ENCODE measurements at regions of chr14 and their contacts with region 1.

Region 1: GRCh38 chr14:59267046-59267445 is 78.6 kb downstream of the DAAM1 start:
- DNase-seq: no peak
- H3K27ac ChIP-seq: no peak overlapping the region
- CTCF ChIP-seq: no peak

Region 2: DNA sequence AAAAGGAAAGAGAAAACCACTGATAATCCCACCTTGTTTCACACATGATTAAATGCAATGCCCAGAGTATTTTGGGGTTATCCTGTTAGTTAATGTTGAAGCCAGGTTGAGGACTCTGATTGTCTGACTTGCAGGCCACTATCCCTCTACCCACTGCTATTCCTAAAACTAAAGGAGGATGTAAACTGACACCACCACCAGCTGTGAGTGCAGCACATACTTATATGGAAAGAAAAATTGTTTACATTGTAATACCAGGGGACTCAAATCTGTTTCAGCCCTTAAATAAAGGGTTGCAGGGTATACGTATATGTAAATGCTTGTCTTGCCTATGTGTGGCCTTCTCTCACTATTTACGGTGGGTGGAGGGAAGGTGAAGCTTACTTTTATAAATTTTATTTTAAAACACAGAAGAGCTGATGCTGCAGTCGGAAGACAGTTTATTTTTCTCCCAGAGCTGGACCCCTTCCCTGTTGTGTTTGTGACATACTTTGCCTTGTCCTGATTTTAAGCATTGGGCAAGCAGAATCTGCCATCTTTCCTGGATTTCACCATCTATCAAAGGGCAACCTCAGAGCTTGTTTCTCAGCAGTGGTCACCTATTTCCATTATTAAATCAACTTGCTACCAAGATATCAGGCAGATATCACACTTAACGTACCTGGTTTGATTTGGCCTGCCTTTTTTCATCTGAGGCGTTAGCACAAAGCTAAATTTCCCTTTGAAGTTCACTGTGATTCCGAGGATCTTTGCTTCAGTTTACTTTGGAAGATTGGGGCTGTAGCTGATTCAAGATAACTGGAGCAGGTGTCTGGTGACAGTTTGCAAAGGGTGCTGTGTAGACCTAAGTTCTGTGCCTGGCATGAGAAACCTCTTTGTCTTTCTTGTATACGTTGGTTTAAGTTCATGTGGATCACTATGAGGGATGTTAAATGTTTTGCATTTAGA is 53.4 kb before region 1 on chr14:
- CTCF ChIA-PET with region 1: interaction called, 11 read pairs
- POLR2A ChIA-PET with region 1: no interaction called
- DNase-seq: no peak
- H3K27ac ChIP-seq: no peak overlapping the region
- CTCF ChIP-seq: no peak